Activated CD4-positive, alpha-beta T cell treated with anti-CD3 and anti-CD28 coated beads for 36 hours (primary cell): ENCODE measurements at regions of chr1 and their contacts with region 1.

Region 1: GRCh38 chr1:203625628-203626019 is 1.0 kb upstream of the ATP2B4 start:
- DNase-seq: peak; percentile 75
- ATAC-seq: peak; percentile 30
- H3K4me3 Mint-ChIP-seq: peak overlapping the region; percentile 85
- H3K27ac Mint-ChIP-seq: peak overlapping the region; percentile 95
- H3K4me1 Mint-ChIP-seq: peaks cover 64% of the 10 kb centered on the region
- H3K27me3 Mint-ChIP-seq: no peaks in the 10 kb centered on the region

Region 2: DNA sequence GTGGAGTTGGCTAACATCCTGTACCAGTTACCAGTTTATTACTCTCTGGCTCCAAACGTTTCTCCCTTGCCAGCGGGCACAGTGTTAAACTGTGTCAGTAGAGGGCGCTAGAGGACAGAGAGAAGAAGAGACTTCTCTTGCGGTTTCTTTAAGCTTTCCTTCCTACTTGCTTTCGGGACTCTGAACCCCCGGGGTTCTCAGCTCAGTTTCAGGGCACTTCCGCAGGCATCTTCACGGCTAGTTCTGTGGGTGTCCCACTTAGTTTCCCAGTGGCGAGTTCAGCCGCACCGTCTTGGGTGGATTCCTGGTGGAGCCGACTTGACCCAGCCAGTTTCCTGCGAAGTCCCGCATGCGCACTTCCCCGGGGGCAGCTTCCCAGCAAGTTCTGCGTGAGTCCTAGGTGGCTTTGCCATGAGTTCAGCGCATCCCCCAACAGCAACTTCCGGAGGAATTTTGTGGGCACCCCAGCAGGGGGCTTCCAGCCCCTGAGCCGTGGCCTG is 358.2 kb before region 1 on chr1:
- CTCF ChIA-PET with region 1: interaction called, 7 read pairs
- POLR2A ChIA-PET with region 1: no interaction called
- intact Hi-C with region 1: loop called (anchors 5 to 10 kb)
- DNase-seq: peak; percentile 87
- ATAC-seq: peak; percentile 58
- H3K4me3 Mint-ChIP-seq: peak overlapping the region; percentile 79
- H3K27ac Mint-ChIP-seq: peak overlapping the region; percentile 53
- H3K4me1 Mint-ChIP-seq: peaks cover 22% of the 10 kb centered on the region
- H3K27me3 Mint-ChIP-seq: no peaks in the 10 kb centered on the region

Region 3: GRCh38 chr1:203304919-203305808 is 320.5 kb before region 1 on chr1 and contains the start of gene BTG2:
- CTCF ChIA-PET with region 1: no interaction called
- POLR2A ChIA-PET with region 1: no interaction called
- intact Hi-C with region 1: loop called in 1 of 2 experiments (anchors 5 kb)
- DNase-seq: peak; percentile 96
- ATAC-seq: peak; percentile 88
- H3K4me3 Mint-ChIP-seq: peak within 1 kb of the TSS; percentile 98
- H3K27ac Mint-ChIP-seq: peak within 1 kb of the TSS; percentile 97
- H3K4me1 Mint-ChIP-seq: peaks cover 54% of the 10 kb centered on the region
- H3K27me3 Mint-ChIP-seq: no peaks in the 10 kb centered on the region
- total RNA-seq, gene BTG2: 114 to 142 TPM

Region 4: DNA sequence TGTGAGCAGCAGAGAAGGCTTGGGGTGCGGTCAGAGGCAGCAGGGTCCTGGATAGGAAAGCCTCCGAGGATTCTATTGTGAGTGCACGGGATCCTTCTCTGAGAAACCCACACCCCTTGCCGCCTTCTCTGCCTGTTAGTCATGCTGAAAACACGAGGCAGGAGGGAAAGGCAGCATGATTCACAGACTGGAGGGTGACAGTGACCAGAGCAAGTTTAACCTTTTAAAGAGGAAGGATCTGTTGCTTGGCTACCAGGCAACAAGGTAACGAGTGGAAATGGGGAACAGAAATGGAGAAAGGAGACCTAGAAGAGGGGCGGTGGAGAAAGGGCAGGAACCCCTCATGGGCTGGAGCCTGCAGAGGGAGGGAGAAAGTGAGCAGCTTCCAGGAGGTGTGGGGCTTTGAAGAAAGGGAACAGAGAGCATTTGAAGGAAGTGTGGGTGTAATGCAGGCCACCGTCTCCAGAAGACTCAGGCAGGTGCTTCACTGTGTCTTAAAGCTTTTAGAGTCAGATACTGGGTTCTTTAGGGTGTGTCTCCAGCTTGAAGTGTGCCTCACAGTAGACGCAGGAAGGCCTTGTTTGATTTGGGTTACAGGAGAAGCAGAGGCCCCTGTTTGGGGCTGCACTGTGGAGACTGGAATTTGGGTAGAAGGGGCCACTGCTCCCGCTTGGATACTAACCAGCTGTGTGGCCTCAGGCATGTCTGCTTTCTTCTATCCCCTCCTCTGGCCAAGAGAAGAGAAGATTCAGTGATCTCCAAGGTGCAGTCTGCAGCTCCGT is 112.6 kb before region 1 on chr1:
- CTCF ChIA-PET with region 1: interaction called, 13 read pairs
- POLR2A ChIA-PET with region 1: interaction called, 3 read pairs
- intact Hi-C with region 1: loop called in 1 of 2 experiments (anchors 2 kb)
- DNase-seq: peak; percentile 81
- ATAC-seq: peak; percentile 88
- H3K4me3 Mint-ChIP-seq: peak overlapping the region; percentile 6
- H3K27ac Mint-ChIP-seq: peak overlapping the region; percentile 83
- H3K4me1 Mint-ChIP-seq: peaks cover 36% of the 10 kb centered on the region
- H3K27me3 Mint-ChIP-seq: no peaks in the 10 kb centered on the region

Region 5: DNA sequence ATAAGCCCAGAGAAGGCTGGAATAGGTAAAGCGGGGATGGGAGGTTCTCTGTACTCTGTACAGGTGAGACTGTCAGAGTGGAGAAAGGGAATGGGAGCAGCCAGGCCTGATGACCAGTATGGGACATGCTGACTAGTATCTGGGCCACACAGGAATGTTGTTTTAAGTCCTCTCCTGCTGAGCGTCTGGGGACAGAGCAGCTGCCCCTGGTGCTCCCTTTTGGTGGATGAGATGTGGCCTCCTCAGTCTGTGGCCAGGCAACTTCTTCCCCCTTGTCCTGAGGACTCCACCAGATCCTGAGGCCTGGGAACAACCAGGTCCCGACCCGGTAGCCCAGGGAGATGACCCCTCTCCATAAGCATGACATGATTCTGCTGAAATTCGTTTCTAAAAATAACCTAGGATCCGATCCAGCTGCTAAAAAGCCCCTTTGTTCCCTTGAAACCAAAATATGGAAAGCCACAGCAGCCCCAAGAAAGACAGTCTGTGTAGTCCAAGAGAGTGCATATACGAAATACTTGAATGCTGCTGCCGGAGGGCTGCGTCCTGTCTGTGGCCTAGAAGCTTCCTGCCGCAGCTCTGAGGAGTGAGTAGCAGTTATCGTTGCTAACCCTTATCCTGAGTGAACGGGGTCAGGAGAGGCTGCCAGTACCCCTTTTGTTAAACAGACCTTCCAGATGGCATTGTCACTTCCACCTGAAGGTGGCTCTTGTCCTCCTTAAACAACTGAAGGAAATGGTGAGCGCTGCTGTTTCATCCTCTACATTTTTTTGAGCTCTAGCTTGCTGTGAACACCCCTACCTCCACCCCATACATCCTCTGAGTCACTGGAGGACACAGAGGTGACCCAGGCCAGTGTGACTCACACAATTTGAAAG is 48.2 kb after region 1 on chr1:
- CTCF ChIA-PET with region 1: interaction called, 13 read pairs
- POLR2A ChIA-PET with region 1: interaction called, 9 read pairs
- intact Hi-C with region 1: loop called (anchors 1 to 2 kb)
- DNase-seq: peak; percentile 81
- ATAC-seq: peak; percentile 95
- H3K4me3 Mint-ChIP-seq: peak overlapping the region; percentile 56
- H3K27ac Mint-ChIP-seq: peak overlapping the region; percentile 83
- H3K4me1 Mint-ChIP-seq: peaks cover 65% of the 10 kb centered on the region
- H3K27me3 Mint-ChIP-seq: no peaks in the 10 kb centered on the region

Region 6: DNA sequence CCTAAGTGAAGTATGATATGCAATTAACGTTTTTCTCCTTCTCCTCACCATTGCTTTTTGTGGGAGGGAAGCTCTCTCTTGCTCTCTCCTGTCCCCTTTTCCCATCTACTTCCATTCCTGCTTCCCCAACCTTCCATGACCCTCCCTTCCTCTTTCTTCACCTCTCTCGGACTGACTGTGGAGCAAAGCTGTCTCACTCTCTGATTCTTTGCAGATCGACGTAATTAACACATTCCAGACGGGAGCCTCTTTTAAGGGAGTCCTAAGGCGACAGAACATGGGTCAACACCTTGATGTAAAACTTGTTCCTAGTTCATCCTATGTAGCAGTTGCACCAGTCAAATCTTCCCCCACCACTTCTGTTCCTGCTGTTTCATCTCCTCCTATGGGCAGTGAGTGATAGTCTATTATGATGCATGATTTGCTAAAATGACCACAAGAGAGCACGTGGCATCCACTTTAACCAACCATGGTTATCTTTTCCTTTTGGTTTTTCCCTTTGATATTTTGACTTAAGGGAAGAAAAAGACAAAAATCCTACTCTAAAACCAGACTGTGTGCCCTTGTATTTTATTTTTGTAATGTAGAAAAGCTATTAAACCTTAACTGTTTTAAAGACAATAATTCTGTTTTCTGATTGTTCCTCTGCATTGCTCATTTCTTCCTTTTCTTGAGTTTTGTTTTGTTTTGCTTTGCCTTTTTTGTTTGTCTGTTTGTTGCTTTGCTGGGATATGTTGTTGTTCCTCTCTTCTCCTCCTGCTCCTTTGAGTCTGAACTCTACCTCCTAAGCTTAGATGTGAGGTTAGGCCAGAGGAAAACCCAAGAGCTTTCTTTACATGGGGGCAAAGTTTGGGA is 107.6 kb after region 1 on chr1:
- CTCF ChIA-PET with region 1: no interaction called
- POLR2A ChIA-PET with region 1: no interaction called
- intact Hi-C with region 1: no loop called
- DNase-seq: no peak
- ATAC-seq: peak; percentile 49
- H3K4me3 Mint-ChIP-seq: no peak overlapping the region
- H3K27ac Mint-ChIP-seq: peak overlapping the region; percentile 1
- H3K4me1 Mint-ChIP-seq: no peaks in the 10 kb centered on the region
- H3K27me3 Mint-ChIP-seq: no peaks in the 10 kb centered on the region

Region 7: DNA sequence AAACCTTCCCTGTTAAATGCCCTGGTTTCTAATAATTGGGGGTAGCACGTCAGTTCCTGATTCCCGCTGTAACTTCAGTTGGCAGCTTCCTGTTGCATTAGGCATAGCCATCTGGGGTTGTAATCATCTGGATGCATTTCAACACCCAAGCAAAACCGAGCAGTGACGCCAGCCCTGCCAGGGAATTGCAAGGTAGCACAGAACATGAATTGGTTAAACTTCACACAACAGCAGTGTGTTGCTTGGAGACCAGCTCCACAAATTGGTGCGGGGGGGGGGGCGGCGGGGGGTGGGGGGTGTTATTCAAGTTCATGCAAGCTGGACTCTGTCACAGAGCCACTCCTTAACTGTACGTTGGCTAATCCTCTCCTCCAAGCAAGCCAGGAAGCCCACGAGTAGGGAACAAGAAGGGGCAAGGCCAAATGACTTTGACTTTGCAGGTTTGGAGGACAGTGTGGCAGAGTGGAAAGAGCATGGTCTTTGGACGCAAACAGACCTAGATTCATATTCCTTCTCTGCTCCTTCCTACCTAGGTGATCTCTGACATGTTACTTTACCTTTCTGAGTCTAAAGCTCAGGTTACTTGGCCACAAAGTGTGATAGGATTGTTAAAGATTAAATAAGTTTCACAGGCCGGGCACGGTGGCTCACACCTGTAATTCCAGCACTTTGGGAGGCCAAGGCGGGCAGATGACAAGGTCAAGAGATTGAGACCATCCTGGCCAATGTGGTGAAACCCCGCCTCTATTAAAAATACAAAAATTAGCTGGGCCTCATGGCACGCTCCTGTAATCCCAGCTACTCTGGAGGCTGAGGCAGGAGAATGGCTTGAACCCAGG is 144.1 kb after region 1 on chr1:
- CTCF ChIA-PET with region 1: interaction called, 4 read pairs
- POLR2A ChIA-PET with region 1: interaction called, 13 read pairs
- intact Hi-C with region 1: loop called (anchors 1 to 2 kb)
- DNase-seq: no peak
- ATAC-seq: no peak
- H3K4me3 Mint-ChIP-seq: no peak overlapping the region
- H3K27ac Mint-ChIP-seq: peak overlapping the region; percentile 59
- H3K4me1 Mint-ChIP-seq: peaks cover 25% of the 10 kb centered on the region
- H3K27me3 Mint-ChIP-seq: no peaks in the 10 kb centered on the region

Region 8: GRCh38 chr1:204128964-204129896 is 503.6 kb after region 1 on chr1:
- CTCF ChIA-PET with region 1: no interaction called
- POLR2A ChIA-PET with region 1: no interaction called
- intact Hi-C with region 1: loop called in 1 of 2 experiments (anchors 5 kb)
- DNase-seq: peak; percentile 82
- ATAC-seq: peak; percentile 88
- H3K4me3 Mint-ChIP-seq: no peak overlapping the region
- H3K27ac Mint-ChIP-seq: no peak overlapping the region
- H3K4me1 Mint-ChIP-seq: peaks cover 5% of the 10 kb centered on the region
- H3K27me3 Mint-ChIP-seq: no peaks in the 10 kb centered on the region